ENCODE measurements at regions of chr20 and their contacts with region 1.

Region 1: DNA sequence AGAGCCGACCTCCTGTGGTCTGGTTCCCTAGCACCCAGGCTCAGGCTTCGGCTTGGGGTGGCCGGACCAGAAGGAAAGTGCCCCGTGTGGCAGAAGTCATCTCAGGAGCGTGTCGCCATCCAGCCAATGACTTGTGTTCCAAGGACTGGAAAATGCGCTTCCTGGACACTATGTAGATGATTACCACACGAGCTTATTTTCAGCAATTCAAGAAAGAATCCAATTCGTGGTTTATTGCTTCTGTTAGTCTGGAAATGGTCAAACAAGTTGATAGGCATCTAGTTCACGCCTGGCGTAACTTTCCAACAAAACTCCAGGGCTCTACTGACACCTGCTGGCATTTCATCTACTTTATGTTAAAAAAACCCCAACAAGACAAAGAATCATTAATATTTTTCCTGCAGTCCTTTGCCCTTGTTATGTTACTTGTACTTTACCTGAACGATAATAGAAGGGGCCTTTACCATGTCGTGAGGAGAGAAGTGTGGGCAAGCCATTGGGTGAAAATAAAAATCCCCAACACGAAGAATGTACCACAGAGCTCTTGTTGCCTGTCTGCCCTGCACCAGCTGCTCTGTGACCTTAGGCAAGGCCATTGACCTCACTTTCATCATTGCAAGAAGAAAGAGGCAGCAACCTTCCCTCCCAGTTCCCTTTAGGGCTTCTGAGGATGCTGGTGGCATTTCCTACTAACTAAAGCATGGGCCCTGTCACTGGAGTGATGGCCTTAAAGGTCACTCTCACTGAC is 154.7 kb upstream of the LAMP5 start:
- DNase-seq: peak; percentile 64
- H3K4me3 ChIP-seq: peak overlapping the region; percentile 34
- H3K27ac ChIP-seq: no peak overlapping the region
- H3K27me3 ChIP-seq: no peaks in the 10 kb centered on the region
- CTCF ChIP-seq: peak; percentile 53

Region 2: DNA sequence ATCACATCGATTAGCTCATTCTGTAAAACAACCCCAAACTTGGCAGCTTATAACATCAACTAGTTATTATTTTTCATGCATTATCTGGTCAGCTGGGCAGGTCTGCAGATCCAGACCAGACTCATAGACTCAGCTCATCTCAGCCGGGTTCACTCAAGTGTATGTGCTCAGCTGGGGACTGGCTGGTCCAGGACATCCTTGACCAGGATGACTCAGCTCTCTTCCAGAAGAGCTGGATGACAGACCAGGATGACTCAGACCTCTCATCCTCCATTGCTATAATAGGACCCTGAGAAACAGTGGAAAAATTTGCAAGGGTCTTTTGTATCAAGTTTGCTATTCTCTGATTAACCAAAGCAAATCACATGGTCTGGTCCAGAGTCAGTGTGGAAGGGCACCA is 603.3 kb before region 1 on chr20:
- in situ Hi-C with region 1: loop called (anchors 25 kb)
- DNase-seq: peak; percentile 96
- H3K4me3 ChIP-seq: no peak overlapping the region
- H3K27ac ChIP-seq: peak overlapping the region; percentile 75
- H3K27me3 ChIP-seq: no peaks in the 10 kb centered on the region
- CTCF ChIP-seq: no peak

Region 3: DNA sequence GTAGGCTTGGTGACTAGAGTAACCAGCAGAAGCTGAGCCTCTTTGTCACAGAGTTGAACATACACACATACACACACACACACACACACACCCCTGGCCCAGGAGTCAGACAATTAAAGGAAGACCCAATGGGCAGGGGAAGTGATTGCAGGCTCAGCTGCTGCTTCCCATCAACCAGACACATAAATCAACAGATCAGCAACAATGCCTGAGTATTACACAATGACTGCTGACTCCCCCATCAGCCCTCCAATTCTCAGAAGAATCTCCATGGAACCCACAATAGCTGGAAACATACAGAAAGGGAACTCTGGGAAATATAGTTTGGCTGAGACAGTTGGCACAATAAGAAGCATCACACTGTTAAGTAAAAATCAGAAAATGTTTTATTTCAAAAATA is 561.2 kb before region 1 on chr20:
- in situ Hi-C with region 1: no loop called
- DNase-seq: no peak
- H3K4me3 ChIP-seq: no peak overlapping the region
- H3K27ac ChIP-seq: no peak overlapping the region
- H3K27me3 ChIP-seq: no peaks in the 10 kb centered on the region
- CTCF ChIP-seq: no peak

Measured in brain microvascular endothelial cell (primary cell).